ENCODE measurements at regions of chrX and their contacts with region 1.

Region 1: DNA sequence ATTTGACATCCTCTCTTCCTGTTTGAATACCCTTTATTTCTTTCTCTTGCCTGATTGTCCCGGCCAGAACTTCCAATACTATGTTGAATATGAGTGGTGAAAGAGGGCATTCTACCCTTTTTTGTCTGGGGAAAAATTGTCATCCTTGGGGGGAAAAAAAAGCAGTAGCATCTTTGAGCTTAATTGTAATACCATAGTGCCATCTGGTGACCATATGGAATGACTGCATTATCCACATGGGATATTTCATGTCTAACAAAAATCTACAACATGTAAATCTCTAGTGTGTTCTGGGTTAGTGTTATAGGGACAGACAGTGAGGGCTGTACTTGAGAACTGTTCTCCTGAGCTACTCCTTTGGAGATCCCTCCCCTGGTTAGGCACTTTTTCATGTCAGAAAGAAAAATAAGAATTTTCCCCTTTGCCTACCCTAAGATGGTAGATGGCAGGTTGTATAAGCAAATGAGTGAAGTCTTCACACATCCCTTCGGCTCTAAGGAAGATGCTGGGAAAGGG is 26.0 kb downstream of the CAPN6 start:
- DNase-seq: peak in 2 of 9 experiments; percentile 4 to 5
- ATAC-seq: no peak
- H3K4me3 ChIP-seq: no peak overlapping the region
- H3K4me3 Mint-ChIP-seq: no peak overlapping the region
- H3K27ac ChIP-seq: no peak overlapping the region
- H3K27ac Mint-ChIP-seq: no peak overlapping the region
- H3K4me1 ChIP-seq: no peaks in the 10 kb centered on the region
- H3K4me1 Mint-ChIP-seq: no peaks in the 10 kb centered on the region
- H3K27me3 ChIP-seq: no peaks in the 10 kb centered on the region
- H3K27me3 Mint-ChIP-seq: peaks cover 2% of the 10 kb centered on the region
- CTCF ChIP-seq: no peak

Region 2: DNA sequence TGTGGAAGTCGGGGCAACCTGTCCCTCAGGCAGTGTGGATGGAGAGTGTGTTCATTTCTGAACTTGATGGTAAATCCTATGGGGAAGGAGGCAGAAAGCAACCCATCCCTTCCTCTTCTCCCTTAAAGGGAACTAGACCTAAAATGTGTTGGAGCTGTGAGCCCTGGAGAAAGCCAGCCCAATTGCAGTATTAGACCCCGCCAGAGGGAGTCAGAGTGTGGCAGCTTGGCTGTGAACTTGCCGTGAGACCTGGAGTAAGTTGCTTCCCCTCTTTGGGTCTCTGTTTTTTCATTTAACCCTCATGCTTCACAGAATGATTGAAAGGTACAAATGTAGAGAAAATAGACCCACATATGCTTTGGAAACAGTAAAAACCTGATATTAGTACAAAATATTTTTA is 257.0 kb before region 1 on chrX:
- CTCF ChIA-PET with region 1: no interaction called
- POLR2A ChIA-PET with region 1: no interaction called
- intact Hi-C with region 1: loop called in 1 of 2 experiments (anchors 5 kb)
- DNase-seq: no peak
- ATAC-seq: no peak
- H3K4me3 ChIP-seq: no peak overlapping the region
- H3K4me3 Mint-ChIP-seq: no peak overlapping the region
- H3K27ac ChIP-seq: no peak overlapping the region
- H3K27ac Mint-ChIP-seq: no peak overlapping the region
- H3K4me1 ChIP-seq: no peaks in the 10 kb centered on the region
- H3K4me1 Mint-ChIP-seq: no peaks in the 10 kb centered on the region
- H3K27me3 ChIP-seq: no peaks in the 10 kb centered on the region
- H3K27me3 Mint-ChIP-seq: peaks cover 6% of the 10 kb centered on the region
- CTCF ChIP-seq: no peak

Region 3: DNA sequence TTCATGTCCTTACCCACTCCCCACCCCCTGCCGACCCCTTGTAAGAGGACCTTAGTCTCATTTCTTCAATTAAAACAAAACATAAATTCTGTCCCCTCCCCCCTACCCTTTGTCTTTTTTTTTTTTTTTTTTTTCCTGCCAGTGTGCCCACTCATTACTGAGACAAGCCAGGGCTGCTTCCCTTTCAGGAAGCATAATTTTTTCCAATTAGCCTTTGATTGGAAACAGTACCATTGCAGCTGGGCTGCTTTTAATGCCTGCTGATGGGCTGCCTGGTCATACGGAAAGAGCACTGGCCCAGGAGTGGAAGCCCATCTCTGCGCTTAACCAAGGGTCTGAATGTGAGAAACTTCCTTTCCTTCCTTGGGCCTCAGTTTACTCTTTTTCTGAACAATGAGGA is 44.5 kb after region 1 on chrX:
- CTCF ChIA-PET with region 1: no interaction called
- POLR2A ChIA-PET with region 1: no interaction called
- intact Hi-C with region 1: loop called in 1 of 2 experiments (anchors 2 kb)
- DNase-seq: no peak
- ATAC-seq: no peak
- H3K4me3 ChIP-seq: no peak overlapping the region
- H3K4me3 Mint-ChIP-seq: no peak overlapping the region
- H3K27ac ChIP-seq: no peak overlapping the region
- H3K27ac Mint-ChIP-seq: no peak overlapping the region
- H3K4me1 ChIP-seq: no peaks in the 10 kb centered on the region
- H3K4me1 Mint-ChIP-seq: no peaks in the 10 kb centered on the region
- H3K27me3 ChIP-seq: no peaks in the 10 kb centered on the region
- H3K27me3 Mint-ChIP-seq: no peaks in the 10 kb centered on the region
- CTCF ChIP-seq: no peak

Region 4: GRCh38 chrX:112066813-112067212 is 822.5 kb after region 1 on chrX:
- CTCF ChIA-PET with region 1: no interaction called
- POLR2A ChIA-PET with region 1: no interaction called
- intact Hi-C with region 1: no loop called
- DNase-seq: no peak
- ATAC-seq: no peak
- H3K4me3 ChIP-seq: no peak overlapping the region
- H3K4me3 Mint-ChIP-seq: no peak overlapping the region
- H3K27ac ChIP-seq: no peak overlapping the region
- H3K27ac Mint-ChIP-seq: no peak overlapping the region
- H3K4me1 ChIP-seq: no peaks in the 10 kb centered on the region
- H3K4me1 Mint-ChIP-seq: no peaks in the 10 kb centered on the region
- H3K27me3 ChIP-seq: no peaks in the 10 kb centered on the region
- H3K27me3 Mint-ChIP-seq: no peaks in the 10 kb centered on the region
- CTCF ChIP-seq: no peak